Dendritic cell treated with granulocyte-macrophage colony-stimulating factor and Interleukin-4, amounts not matched to agents 40 ng/mL and 50 ng/mL, for 4 days (primary cell): ENCODE measurements at regions of chr9 and their contacts with region 1.

Region 1: GRCh38 chr9:109012876-109013678 is at the start of gene CTNNAL1:
- H3K4me3 Mint-ChIP-seq: peak within 1 kb of the TSS; percentile 97
- H3K27ac Mint-ChIP-seq: peak within 1 kb of the TSS; percentile 93
- H3K4me1 Mint-ChIP-seq: peaks cover 50% of the 10 kb centered on the region
- H3K27me3 Mint-ChIP-seq: no peaks in the 10 kb centered on the region

Region 2: DNA sequence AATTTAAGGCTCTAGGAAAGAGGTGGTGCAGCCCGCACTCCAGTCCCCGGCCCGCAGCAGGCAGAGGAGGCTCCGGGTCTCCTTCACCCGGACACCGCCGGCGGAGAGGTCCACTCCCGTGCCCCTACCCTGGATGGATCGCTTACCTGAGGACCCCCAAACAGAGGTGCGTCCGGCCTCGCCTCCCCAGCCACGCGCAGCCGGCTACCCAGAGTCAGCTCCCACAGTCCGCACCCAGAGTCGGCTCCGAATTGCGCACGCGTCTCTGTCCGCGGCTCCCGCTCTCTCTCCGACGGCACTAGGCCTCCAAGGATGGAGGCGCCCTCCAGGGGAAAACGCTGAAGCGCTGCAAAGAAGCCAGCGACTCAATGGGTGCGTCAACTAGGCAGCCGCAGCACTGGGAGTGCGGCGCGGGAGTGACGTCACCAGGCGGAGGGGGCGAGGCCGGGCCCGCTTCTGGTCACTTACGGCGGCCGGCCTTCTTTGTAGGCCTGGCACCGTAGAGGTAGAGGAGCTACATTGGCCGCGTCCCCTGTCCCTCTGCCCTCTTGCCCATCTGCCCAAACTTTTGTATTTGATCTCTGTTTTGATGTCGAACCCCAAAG is 79.3 kb before region 1 on chr9 and contains the start of gene ELP1:
- intact Hi-C with region 1: loop called (anchors 5 kb)
- H3K4me3 Mint-ChIP-seq: peak within 1 kb of the TSS; percentile 98
- H3K27ac Mint-ChIP-seq: peak within 1 kb of the TSS; percentile 96
- H3K4me1 Mint-ChIP-seq: peaks cover 23% of the 10 kb centered on the region
- H3K27me3 Mint-ChIP-seq: no peaks in the 10 kb centered on the region

Region 3: DNA sequence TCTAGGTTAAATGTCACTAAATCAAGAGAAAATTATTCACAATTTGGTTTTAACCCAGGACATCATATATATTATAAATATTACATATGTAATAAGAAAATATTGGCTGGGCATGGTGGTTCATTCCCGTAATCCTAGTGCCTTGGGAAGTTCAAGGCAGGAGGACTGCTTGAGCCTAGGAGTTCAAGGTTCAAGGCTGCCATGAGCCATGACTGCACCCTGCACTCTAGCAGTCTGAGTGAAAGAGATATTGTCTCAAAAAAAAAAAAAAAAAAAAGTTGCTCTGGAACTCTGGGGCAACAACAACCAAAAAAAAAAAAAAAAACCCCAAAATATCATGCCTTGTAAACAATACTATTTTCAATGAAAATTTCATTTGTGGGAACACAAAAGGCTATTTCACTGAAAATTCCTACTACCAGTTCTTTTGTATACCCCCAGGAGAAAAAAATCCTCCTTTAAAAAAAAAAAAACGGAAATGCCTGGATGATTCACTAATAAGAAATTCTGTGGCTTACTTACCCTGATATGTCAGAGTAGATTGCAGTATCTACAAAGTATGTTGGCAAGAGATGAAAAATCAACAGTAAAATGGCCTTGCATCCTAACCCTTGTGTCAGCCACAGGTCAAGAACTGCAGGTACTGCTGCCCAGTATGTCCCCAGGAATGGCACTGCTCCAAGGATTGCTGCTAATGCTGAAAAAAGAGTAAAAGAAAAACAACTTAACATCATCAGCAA is 22.8 kb after region 1 on chr9:
- intact Hi-C with region 1: no loop called
- H3K4me3 Mint-ChIP-seq: no peak overlapping the region
- H3K27ac Mint-ChIP-seq: no peak overlapping the region
- H3K4me1 Mint-ChIP-seq: peaks cover 5% of the 10 kb centered on the region
- H3K27me3 Mint-ChIP-seq: no peaks in the 10 kb centered on the region